Caco-2 (cell line): ENCODE measurements at regions of chr15 and their contacts with region 1.

Region 1: DNA sequence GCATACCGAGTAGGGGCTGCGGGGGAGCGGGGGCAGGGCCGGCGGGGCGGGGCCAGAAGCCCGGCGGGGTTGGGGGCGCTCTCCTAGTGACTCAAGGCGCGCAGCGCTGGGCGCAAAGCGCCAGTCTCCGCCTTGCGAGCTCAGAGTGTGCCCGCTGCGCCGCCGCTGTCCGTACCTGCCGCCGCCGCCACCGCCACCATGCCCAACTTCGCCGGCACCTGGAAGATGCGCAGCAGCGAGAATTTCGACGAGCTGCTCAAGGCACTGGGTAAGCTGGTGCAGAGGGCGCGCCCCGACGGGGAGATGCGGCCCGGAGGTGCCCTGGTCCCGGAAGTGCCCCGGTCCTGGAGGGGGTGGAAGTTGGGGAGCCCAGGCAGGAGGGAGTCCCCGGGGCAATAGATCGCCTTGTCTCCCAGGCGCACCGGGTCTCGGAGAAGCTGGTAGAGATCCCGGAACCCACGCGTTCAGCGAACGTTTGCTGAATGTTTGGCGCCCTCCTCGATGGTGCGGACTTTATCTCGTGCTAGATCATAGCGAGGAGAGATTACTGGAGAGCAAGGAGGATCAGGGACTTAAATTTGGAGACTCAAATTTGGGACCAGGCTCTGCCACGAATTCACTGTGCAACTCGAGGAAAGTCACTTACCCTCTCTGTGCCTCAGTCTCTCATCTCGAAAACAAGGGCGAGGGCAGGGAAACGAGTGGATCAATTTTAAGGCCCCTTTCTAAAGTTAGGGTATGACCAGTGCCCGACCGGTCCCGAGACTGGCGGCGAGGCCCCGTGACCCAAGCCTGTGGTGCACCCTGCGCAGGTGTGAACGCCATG is at the start of gene CRABP1:
- DNase-seq: peak in 1 of 2 experiments; percentile 49
- H3K4me3 ChIP-seq: peak within 1 kb of the TSS; percentile 68
- H3K4me3 Mint-ChIP-seq: peak within 1 kb of the TSS; percentile 77
- H3K27ac Mint-ChIP-seq: no peak within 1 kb of the TSS
- H3K4me1 ChIP-seq: 0 out of 2 replicates have a peak, but pooled peaks cover 5% of the 10 kb centered on the region
- H3K4me1 Mint-ChIP-seq: peaks cover 11% of the 10 kb centered on the region
- H3K27me3 ChIP-seq: no peaks in the 10 kb centered on the region
- H3K27me3 Mint-ChIP-seq: no peaks in the 10 kb centered on the region
- CTCF ChIP-seq: no peak
- total RNA-seq, gene CRABP1: 113 and 116 TPM in 2 replicates

Region 2: GRCh38 chr15:78315686-78316282 is 24.7 kb before region 1 on chr15:
- CTCF ChIA-PET with region 1: no interaction called
- POLR2A ChIA-PET with region 1: no interaction called
- intact Hi-C with region 1: no loop called
- DNase-seq: peak; percentile 51 to 52
- H3K4me3 ChIP-seq: no peak overlapping the region
- H3K4me3 Mint-ChIP-seq: no peak overlapping the region
- H3K27ac Mint-ChIP-seq: no peak overlapping the region
- H3K4me1 ChIP-seq: no peaks in the 10 kb centered on the region
- H3K4me1 Mint-ChIP-seq: no peaks in the 10 kb centered on the region
- H3K27me3 ChIP-seq: no peaks in the 10 kb centered on the region
- H3K27me3 Mint-ChIP-seq: no peaks in the 10 kb centered on the region
- CTCF ChIP-seq: peak; percentile 22 to 64

Region 3: DNA sequence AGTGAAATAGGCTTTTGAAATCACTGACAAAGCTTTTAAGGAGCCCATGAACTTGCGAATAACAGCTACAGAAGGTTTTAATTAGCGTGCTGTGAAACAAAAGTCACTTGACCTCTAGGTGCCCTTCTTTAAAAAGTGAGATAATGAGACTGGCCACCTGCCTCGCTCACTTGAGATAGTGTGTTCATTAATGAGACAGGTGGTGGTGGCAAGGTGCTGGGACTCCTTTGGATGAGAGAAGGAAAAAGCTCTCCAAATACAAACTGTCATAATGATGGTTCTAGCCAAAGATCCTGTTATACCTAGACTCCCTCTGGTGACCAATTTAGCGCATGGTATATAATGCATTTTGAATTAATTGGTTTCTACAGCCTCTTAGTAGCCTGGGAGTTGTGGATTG is 74.8 kb after region 1 on chr15:
- CTCF ChIA-PET with region 1: interaction called, 4 read pairs
- POLR2A ChIA-PET with region 1: no interaction called
- intact Hi-C with region 1: loop called (anchors 2 kb)
- DNase-seq: peak in 1 of 2 experiments; percentile 34
- H3K4me3 ChIP-seq: no peak overlapping the region
- H3K4me3 Mint-ChIP-seq: no peak overlapping the region
- H3K27ac Mint-ChIP-seq: no peak overlapping the region
- H3K4me1 ChIP-seq: peaks cover 7% of the 10 kb centered on the region; the same call in 1 of the 2 replicates
- H3K4me1 Mint-ChIP-seq: peaks cover 7% of the 10 kb centered on the region
- H3K27me3 ChIP-seq: no peaks in the 10 kb centered on the region
- H3K27me3 Mint-ChIP-seq: peaks cover 2% of the 10 kb centered on the region
- CTCF ChIP-seq: peak in 1 of 2 experiments; percentile 37